ENCODE measurements at regions of chr16 and their contacts with region 1.

Region 1: DNA sequence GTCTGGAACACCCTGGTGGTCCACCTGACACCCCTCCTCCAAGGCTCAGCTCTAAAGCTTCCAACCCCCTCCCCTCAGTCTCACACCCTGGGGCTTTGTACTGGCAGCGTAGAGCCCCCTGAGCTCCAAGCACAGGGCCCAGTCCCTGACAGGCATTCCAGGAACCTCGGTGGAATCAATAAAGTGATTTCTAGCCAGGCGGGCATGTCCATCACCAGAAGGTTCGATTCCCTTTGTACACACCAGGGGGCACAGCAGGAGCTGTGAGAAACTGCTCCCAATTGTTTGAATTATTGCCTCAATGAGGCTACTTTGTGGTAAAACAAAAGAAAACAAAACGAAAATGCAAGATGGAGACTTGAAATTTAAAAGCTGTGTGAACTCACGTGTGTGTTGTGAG is 51.8 kb downstream of the SMPD3 start:
- DNase-seq: peak in 8 of 9 experiments; percentile 32 to 74 (median 60)
- ATAC-seq: peak; percentile 82
- H3K4me3 ChIP-seq: no peak overlapping the region
- H3K4me3 Mint-ChIP-seq: no peak overlapping the region
- H3K27ac ChIP-seq: no peak overlapping the region
- H3K27ac Mint-ChIP-seq: no peak overlapping the region
- H3K4me1 ChIP-seq: peaks cover 18% of the 10 kb centered on the region
- H3K4me1 Mint-ChIP-seq: peaks cover 17% of the 10 kb centered on the region
- H3K27me3 ChIP-seq: no peaks in the 10 kb centered on the region
- H3K27me3 Mint-ChIP-seq: no peaks in the 10 kb centered on the region
- CTCF ChIP-seq: peak; percentile 75

Region 2: GRCh38 chr16:68146585-68146984 is 249.9 kb before region 1 on chr16:
- CTCF ChIA-PET with region 1: no interaction called
- POLR2A ChIA-PET with region 1: no interaction called
- intact Hi-C with region 1: no loop called
- DNase-seq: peak in 1 of 9 experiments; percentile 23
- ATAC-seq: no peak
- H3K4me3 ChIP-seq: no peak overlapping the region
- H3K4me3 Mint-ChIP-seq: no peak overlapping the region
- H3K27ac ChIP-seq: no peak overlapping the region
- H3K27ac Mint-ChIP-seq: peak overlapping the region; percentile 60
- H3K4me1 ChIP-seq: peaks cover 11% of the 10 kb centered on the region
- H3K4me1 Mint-ChIP-seq: peaks cover 52% of the 10 kb centered on the region
- H3K27me3 ChIP-seq: no peaks in the 10 kb centered on the region
- H3K27me3 Mint-ChIP-seq: no peaks in the 10 kb centered on the region
- CTCF ChIP-seq: no peak

Region 3: GRCh38 chr16:68406451-68407152 is 10.1 kb after region 1 on chr16:
- CTCF ChIA-PET with region 1: interaction called, 33 read pairs
- POLR2A ChIA-PET with region 1: no interaction called
- intact Hi-C with region 1: no loop called
- DNase-seq: no peak
- ATAC-seq: no peak
- H3K4me3 ChIP-seq: no peak overlapping the region
- H3K4me3 Mint-ChIP-seq: no peak overlapping the region
- H3K27ac ChIP-seq: no peak overlapping the region
- H3K27ac Mint-ChIP-seq: no peak overlapping the region
- H3K4me1 ChIP-seq: no peaks in the 10 kb centered on the region
- H3K4me1 Mint-ChIP-seq: no peaks in the 10 kb centered on the region
- H3K27me3 ChIP-seq: no peaks in the 10 kb centered on the region
- H3K27me3 Mint-ChIP-seq: peaks cover 4% of the 10 kb centered on the region
- CTCF ChIP-seq: no peak

Region 4: DNA sequence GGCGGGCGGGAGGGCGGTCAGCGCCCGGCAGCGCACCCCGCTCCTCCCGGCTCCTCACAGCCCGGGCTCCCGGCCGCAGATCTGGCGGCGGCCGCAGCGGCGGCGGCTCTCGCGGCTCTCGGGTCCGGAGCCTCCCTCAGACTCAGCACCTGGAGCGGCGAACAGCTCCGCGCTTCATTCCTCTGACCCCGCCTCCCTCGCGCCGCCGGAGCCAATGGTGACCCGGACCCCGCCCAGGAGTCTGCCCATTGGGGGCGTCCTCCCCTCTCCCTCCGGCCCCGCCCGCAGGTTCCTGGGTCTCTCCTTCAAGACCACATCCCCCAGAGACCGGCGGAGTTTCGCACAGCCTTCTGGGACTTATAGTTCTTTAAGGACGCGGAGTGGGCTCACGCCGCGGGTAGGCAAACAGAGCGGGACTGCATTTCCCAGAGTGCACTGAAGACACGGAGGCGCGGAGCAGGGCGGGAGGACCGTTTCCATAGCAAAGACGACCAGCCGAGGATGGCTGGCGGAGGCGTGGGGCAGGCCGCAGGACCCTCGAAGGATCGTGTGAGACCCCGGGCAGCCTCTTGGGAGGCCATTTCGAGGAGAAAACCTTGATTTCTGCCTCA is 52.0 kb after region 1 on chr16 and contains the start of gene SMPD3:
- CTCF ChIA-PET with region 1: interaction called, 24 read pairs
- POLR2A ChIA-PET with region 1: no interaction called
- intact Hi-C with region 1: loop called (anchors 1 to 10 kb)
- DNase-seq: peak; percentile 96 to 99 (median 98)
- ATAC-seq: peak; percentile 98
- H3K4me3 ChIP-seq: peak within 1 kb of the TSS; percentile 46 to 49
- H3K4me3 Mint-ChIP-seq: peak within 1 kb of the TSS; percentile 68
- H3K27ac ChIP-seq: peak within 1 kb of the TSS in 1 of 2 experiments; percentile 37
- H3K27ac Mint-ChIP-seq: no peak within 1 kb of the TSS
- H3K4me1 ChIP-seq: peaks cover 26% of the 10 kb centered on the region
- H3K4me1 Mint-ChIP-seq: peaks cover 21% of the 10 kb centered on the region
- H3K27me3 ChIP-seq: peaks cover 18 to 25% of the 10 kb centered on the region in 2 experiments
- H3K27me3 Mint-ChIP-seq: peaks cover 24% of the 10 kb centered on the region
- CTCF ChIP-seq: no peak
- total RNA-seq, gene SMPD3: 0.24 to 0.25 TPM

Region 5: GRCh38 chr16:68499006-68499405 is 102.5 kb after region 1 on chr16:
- CTCF ChIA-PET with region 1: interaction called, 360 read pairs
- POLR2A ChIA-PET with region 1: no interaction called
- intact Hi-C with region 1: no loop called
- DNase-seq: no peak
- ATAC-seq: no peak
- H3K4me3 ChIP-seq: no peak overlapping the region
- H3K4me3 Mint-ChIP-seq: no peak overlapping the region
- H3K27ac ChIP-seq: no peak overlapping the region
- H3K27ac Mint-ChIP-seq: no peak overlapping the region
- H3K4me1 ChIP-seq: no peaks in the 10 kb centered on the region
- H3K4me1 Mint-ChIP-seq: peaks cover 5% of the 10 kb centered on the region
- H3K27me3 ChIP-seq: no peaks in the 10 kb centered on the region
- H3K27me3 Mint-ChIP-seq: no peaks in the 10 kb centered on the region
- CTCF ChIP-seq: no peak

Region 6: DNA sequence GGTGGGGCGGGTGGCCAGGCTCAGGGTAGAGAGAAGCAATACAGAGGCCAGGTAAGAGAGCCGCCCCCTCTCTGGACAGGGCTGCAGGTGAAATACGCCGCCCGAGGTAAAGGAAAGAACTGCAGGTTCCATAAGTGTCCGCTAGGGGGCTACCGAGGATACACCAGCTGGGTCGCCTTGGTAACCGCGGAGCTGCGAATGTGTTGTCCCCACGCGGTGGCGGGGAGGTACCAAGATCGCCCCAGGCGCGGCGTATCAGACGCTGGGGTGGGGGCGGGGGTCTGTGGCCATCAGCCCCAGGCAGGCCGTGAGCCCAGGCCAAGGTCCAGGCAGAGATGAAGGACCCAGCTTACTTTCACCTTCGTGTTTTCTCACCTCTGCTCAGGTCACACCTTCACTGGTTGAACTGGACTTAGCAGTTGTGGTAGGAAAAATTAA is 124.2 kb after region 1 on chr16:
- CTCF ChIA-PET with region 1: interaction called, 360 read pairs
- POLR2A ChIA-PET with region 1: interaction called, 4 read pairs
- intact Hi-C with region 1: no loop called
- DNase-seq: peak; percentile 74 to 93 (median 89)
- ATAC-seq: peak; percentile 99
- H3K4me3 ChIP-seq: peak overlapping the region; percentile 28 to 33
- H3K4me3 Mint-ChIP-seq: peak overlapping the region; percentile 62
- H3K27ac ChIP-seq: no peak overlapping the region
- H3K27ac Mint-ChIP-seq: peak overlapping the region; percentile 74
- H3K4me1 ChIP-seq: peaks cover 5% of the 10 kb centered on the region
- H3K4me1 Mint-ChIP-seq: peaks cover 11% of the 10 kb centered on the region
- H3K27me3 ChIP-seq: no peaks in the 10 kb centered on the region
- H3K27me3 Mint-ChIP-seq: peaks cover 2% of the 10 kb centered on the region
- CTCF ChIP-seq: peak; percentile 99

Measured in CD8-positive, alpha-beta T cell (primary cell).